Dendritic cell treated with granulocyte-macrophage colony-stimulating factor and Interleukin-4, amounts not matched to agents 40 ng/mL and 50 ng/mL, for 4 days (primary cell): ENCODE measurements at regions of chr1 and their contacts with region 1.

Region 1: GRCh38 chr1:16187748-16188401 is 24.6 kb downstream of the ARHGEF19 start:
- H3K4me3 Mint-ChIP-seq: no peak overlapping the region
- H3K27ac Mint-ChIP-seq: no peak overlapping the region
- H3K4me1 Mint-ChIP-seq: peaks cover 14% of the 10 kb centered on the region
- H3K27me3 Mint-ChIP-seq: peaks cover 24% of the 10 kb centered on the region

Region 2: GRCh38 chr1:15323351-15323988 is 864.4 kb before region 1 on chr1:
- intact Hi-C with region 1: no loop called
- H3K4me3 Mint-ChIP-seq: no peak overlapping the region
- H3K27ac Mint-ChIP-seq: peak overlapping the region; percentile 66
- H3K4me1 Mint-ChIP-seq: peaks cover 55% of the 10 kb centered on the region
- H3K27me3 Mint-ChIP-seq: peaks cover 6% of the 10 kb centered on the region

Region 3: GRCh38 chr1:16078925-16079656 is 108.8 kb before region 1 on chr1:
- intact Hi-C with region 1: loop called (anchors 1 kb)
- H3K4me3 Mint-ChIP-seq: peak overlapping the region; percentile 65
- H3K27ac Mint-ChIP-seq: no peak overlapping the region
- H3K4me1 Mint-ChIP-seq: peaks cover 5% of the 10 kb centered on the region
- H3K27me3 Mint-ChIP-seq: peaks cover 27% of the 10 kb centered on the region